Ascending aorta (tissue), 2 donors: ENCODE measurements at regions of chr7 and their contacts with region 1.

Region 1: GRCh38 chr7:44490351-44491200 is at the start of gene NUDCD3:
- DNase-seq: peak; percentile 28 to 89
- H3K4me3 ChIP-seq: peak within 1 kb of the TSS; percentile 89 to 95
- H3K27ac ChIP-seq: peak within 1 kb of the TSS; percentile 97
- H3K4me1 ChIP-seq: peaks cover 4 to 25% of the 10 kb centered on the region in 2 donors
- H3K27me3 ChIP-seq: no peaks in the 10 kb centered on the region
- CTCF ChIP-seq: peak in 2 of 3 experiments; percentile 17 to 30
- total RNA-seq, gene NUDCD3: 39.3 TPM

Region 2: DNA sequence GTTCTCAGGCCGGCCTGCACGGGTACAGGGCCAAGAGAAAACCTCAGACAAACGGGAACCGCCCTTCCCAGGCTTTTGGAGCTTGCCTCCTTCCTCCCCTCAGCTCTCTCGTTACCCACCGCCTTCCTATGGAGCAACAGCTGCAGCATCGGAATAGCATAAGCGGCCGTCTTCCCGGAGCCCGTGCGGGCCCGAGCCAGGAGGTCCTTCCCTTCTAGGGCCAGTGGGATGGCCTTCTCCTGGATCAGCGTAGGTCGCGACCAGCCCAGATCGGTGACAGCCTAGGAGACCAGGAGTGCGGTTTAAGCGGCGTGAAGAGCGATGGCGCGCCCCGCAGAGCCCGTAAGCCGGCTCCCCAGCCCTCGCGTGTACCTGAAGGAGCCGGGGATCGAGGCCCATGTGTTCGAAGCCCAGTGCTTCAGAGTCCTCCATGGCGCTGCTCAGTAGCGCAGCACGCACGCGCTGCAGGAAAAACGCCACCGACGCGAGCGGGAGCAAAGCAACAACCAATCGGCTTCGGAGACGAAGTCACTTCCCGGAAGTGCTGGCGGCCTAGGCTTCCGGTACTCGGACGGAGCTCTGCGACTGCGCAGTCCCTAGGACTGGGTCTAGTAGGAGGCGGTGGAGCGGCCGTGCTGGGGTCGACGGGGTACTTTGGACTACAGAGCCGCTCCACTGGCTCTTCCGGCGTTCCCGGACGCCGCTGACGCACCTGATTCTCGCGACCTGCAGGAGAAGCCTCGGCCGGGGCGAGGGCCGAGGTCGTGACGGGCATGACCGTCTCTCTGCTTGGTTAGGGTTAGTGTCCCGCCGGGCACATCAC is 83.1 kb after region 1 on chr7 and contains the start of gene DDX56:
- intact Hi-C with region 1: loop called (anchors 2 kb)
- DNase-seq: peak; percentile 64 to 96
- H3K4me3 ChIP-seq: peak within 1 kb of the TSS; percentile 87 to 97
- H3K27ac ChIP-seq: peak within 1 kb of the TSS; percentile 89 to 95
- H3K4me1 ChIP-seq: peaks cover 8 to 18% of the 10 kb centered on the region in 2 donors
- H3K27me3 ChIP-seq: no peaks in the 10 kb centered on the region
- CTCF ChIP-seq: no peak
- total RNA-seq, gene DDX56: 51.0 TPM